ENCODE measurements at regions of chr5 and their contacts with region 1.

Region 1: DNA sequence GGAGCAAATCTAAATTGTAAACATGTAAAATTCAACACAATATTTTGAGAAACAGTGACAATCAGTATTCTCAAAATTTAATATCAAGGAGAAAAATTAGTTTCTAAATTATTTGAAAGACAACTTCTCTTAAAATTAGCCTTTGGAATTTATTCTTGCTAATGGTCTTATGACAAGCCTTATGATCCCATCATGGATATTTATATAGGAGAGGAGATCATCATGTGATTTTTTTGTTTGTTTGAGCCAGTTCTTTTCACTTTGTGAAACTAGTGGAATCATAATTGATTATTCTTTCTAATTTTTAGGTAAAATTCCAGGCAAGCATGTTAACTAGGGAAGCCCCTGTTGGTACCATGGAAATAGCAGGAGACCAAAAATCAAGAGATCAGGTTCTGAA is 24.7 kb downstream of the DMXL1 start:
- DNase-seq: no peak
- H3K4me3 ChIP-seq: no peak overlapping the region
- H3K27me3 ChIP-seq: no peaks in the 10 kb centered on the region
- CTCF ChIP-seq: no peak

Region 2: GRCh38 chr5:119080935-119081334 is 14.7 kb before region 1 on chr5:
- CTCF ChIA-PET with region 1: interaction called, 3 read pairs
- POLR2A ChIA-PET with region 1: interaction called, 13 read pairs
- DNase-seq: no peak
- H3K4me3 ChIP-seq: no peak overlapping the region
- H3K27me3 ChIP-seq: no peaks in the 10 kb centered on the region
- CTCF ChIP-seq: no peak

Region 3: GRCh38 chr5:119105971-119106370 is 10.4 kb after region 1 on chr5:
- CTCF ChIA-PET with region 1: no interaction called
- POLR2A ChIA-PET with region 1: no interaction called
- DNase-seq: no peak
- H3K4me3 ChIP-seq: no peak overlapping the region
- H3K27me3 ChIP-seq: no peaks in the 10 kb centered on the region
- CTCF ChIP-seq: no peak

Region 4: GRCh38 chr5:119229950-119230349 is 134.3 kb after region 1 on chr5:
- CTCF ChIA-PET with region 1: no interaction called
- POLR2A ChIA-PET with region 1: no interaction called
- DNase-seq: no peak
- H3K4me3 ChIP-seq: no peak overlapping the region
- H3K27me3 ChIP-seq: no peaks in the 10 kb centered on the region
- CTCF ChIP-seq: no peak

Region 5: GRCh38 chr5:119418531-119419116 is 323.0 kb after region 1 on chr5:
- CTCF ChIA-PET with region 1: no interaction called
- POLR2A ChIA-PET with region 1: no interaction called
- DNase-seq: no peak
- H3K4me3 ChIP-seq: no peak overlapping the region
- H3K27me3 ChIP-seq: no peaks in the 10 kb centered on the region
- CTCF ChIP-seq: no peak

Measured in BJ (cell line).